Calu3 (cell line): ENCODE measurements at regions of chr2 and their contacts with region 1.

Region 1: DNA sequence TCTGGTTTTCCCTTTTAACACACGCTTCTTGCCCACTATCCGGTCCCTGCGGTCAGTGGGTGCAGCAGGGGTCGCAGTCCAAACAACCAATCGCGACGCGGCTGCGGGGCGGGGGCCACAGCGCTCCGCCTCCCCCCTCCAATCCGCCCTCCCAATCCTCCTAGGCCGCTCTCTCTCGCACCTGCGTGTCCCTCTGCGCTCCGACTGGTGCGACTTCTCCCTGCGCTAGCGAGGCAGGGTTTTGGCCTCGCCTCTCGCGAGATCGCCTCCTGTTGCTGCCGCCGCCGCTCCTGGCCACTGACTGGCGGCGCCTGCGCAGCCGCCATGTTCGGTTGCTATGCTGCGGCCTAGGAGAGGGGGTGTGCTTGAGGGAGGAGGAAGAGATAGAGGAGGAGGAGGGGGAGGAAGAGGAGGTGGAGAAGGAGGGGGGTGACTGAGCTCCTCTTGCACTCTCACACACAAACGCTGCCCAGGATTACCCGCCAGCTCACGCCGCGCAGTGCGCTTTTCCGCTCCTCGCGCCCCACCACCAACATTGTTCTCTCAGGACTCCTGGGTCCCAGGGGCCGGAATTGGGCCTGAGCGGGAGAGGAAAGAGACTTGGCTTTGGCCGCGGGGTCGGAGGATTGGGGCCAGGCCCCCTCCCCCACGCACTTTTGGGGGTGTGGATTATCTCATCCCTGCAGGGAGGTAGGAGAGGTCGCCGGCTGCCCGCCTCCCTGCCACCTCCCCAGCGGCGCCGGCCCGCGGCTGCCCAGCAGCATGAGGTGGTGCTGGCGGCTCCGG is at the start of gene PTPN4:
- DNase-seq: peak; percentile 96
- H3K4me3 Mint-ChIP-seq: peak within 1 kb of the TSS; percentile 90
- H3K27ac Mint-ChIP-seq: peak within 1 kb of the TSS; percentile 91
- H3K4me1 Mint-ChIP-seq: peaks cover 9% of the 10 kb centered on the region
- H3K27me3 Mint-ChIP-seq: no peaks in the 10 kb centered on the region
- CTCF ChIP-seq: no peak
- total RNA-seq, gene PTPN4: 47.4 and 52.4 TPM in 2 replicates

Region 2: DNA sequence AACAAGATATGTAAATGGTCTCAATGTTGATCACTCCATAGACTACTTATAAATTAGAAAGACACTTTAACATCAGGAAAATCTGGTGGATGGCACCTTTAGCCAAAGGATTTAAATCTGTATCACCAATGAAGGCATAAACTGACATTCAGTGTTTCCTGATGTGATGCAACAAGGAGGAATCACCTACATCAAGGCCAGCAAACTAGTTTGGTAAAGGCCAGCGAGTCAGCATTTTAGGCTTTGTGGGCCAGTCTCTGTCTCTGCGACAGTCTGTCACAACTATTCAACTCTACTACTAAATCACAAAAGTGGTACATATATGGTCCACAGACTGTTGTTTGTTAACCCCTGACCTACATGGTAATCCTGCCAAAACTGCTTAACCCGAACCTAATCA is 426.3 kb before region 1 on chr2:
- CTCF ChIA-PET with region 1: no interaction called
- intact Hi-C with region 1: no loop called
- DNase-seq: no peak
- H3K4me3 Mint-ChIP-seq: no peak overlapping the region
- H3K27ac Mint-ChIP-seq: no peak overlapping the region
- H3K4me1 Mint-ChIP-seq: no peaks in the 10 kb centered on the region
- H3K27me3 Mint-ChIP-seq: no peaks in the 10 kb centered on the region
- CTCF ChIP-seq: no peak

Region 3: GRCh38 chr2:119801040-119801439 is 41.4 kb after region 1 on chr2:
- CTCF ChIA-PET with region 1: no interaction called
- intact Hi-C with region 1: loop called (anchors 5 kb)
- DNase-seq: no peak
- H3K4me3 Mint-ChIP-seq: no peak overlapping the region
- H3K27ac Mint-ChIP-seq: no peak overlapping the region
- H3K4me1 Mint-ChIP-seq: peaks cover 23% of the 10 kb centered on the region
- H3K27me3 Mint-ChIP-seq: no peaks in the 10 kb centered on the region
- CTCF ChIP-seq: no peak

Region 4: GRCh38 chr2:119873350-119874315 is 114.0 kb after region 1 on chr2:
- CTCF ChIA-PET with region 1: no interaction called
- intact Hi-C with region 1: loop called (anchors 5 kb)
- DNase-seq: no peak
- H3K4me3 Mint-ChIP-seq: no peak overlapping the region
- H3K27ac Mint-ChIP-seq: peak overlapping the region; percentile 2
- H3K4me1 Mint-ChIP-seq: peaks cover 52% of the 10 kb centered on the region
- H3K27me3 Mint-ChIP-seq: no peaks in the 10 kb centered on the region
- CTCF ChIP-seq: no peak